GM13977 (cell line): ENCODE measurements at regions of chr11 and their contacts with region 1.

Region 1: GRCh38 chr11:14764579-14765527 is 121.2 kb downstream of the PDE3B start:
- DNase-seq: peak; percentile 49
- CTCF ChIP-seq: no peak

Region 2: GRCh38 chr11:14537134-14537599 is 227.7 kb before region 1 on chr11:
- in situ Hi-C with region 1: loop called (anchors 25 kb)
- DNase-seq: peak; percentile 61
- CTCF ChIP-seq: peak; percentile 79

Region 3: GRCh38 chr11:15074206-15075161 is 309.6 kb after region 1 on chr11:
- in situ Hi-C with region 1: no loop called
- DNase-seq: peak; percentile 70
- CTCF ChIP-seq: peak; percentile 89